ENCODE measurements at regions of chr2 and their contacts with region 1.

Region 1: DNA sequence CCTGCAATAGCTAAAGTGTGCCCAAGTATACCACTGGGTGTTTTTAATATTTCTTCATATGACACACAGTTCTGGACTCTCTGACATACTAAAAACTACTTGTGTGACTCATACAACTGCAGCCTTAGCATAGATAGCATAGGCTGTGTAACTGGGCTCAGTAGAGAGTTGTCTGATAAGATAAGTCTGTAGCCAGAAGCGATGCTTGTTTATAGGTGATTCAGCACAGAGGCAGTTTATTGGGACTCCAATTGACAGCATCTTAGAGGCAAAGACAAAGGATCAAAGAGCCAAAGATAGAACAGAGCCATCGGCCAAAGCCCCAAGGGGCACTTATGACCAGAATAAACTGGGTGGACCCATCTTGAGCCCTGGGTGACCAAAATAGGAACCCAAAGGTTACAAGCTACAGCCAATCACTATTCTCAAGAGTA is 42.3 kb downstream of the AAK1 start:
- DNase-seq: no peak
- ATAC-seq: peak; percentile 86
- H3K4me3 Mint-ChIP-seq: no peak overlapping the region
- H3K27ac Mint-ChIP-seq: peak overlapping the region; percentile 82
- H3K4me1 Mint-ChIP-seq: peaks cover 90% of the 10 kb centered on the region
- H3K27me3 Mint-ChIP-seq: no peaks in the 10 kb centered on the region
- CTCF ChIP-seq: no peak

Region 2: DNA sequence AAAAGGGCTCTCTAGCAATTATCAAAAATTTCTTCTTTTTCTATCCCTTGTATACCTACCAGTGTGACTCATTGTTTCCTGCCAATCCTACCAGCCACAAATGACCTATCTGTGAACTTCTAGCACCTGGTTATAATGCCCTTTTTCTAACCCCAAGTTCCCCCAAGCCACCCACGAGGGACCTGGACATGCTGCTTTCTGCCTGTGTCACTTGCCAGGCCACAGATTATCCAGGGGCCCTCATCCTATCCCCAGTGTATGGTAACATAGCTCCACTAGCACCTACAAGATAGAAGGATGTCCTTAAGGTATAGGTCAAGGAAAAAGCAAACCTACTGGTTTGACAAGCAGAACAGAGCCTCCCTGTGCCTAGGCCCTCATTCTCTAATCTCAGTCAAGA is 15.6 kb after region 1 on chr2:
- CTCF ChIA-PET with region 1: interaction called, 10 read pairs
- POLR2A ChIA-PET with region 1: interaction called, 11 read pairs
- intact Hi-C with region 1: no loop called
- DNase-seq: peak; percentile 86
- ATAC-seq: peak; percentile 57
- H3K4me3 Mint-ChIP-seq: peak overlapping the region; percentile 17
- H3K27ac Mint-ChIP-seq: peak overlapping the region; percentile 75
- H3K4me1 Mint-ChIP-seq: peaks cover 40% of the 10 kb centered on the region
- H3K27me3 Mint-ChIP-seq: no peaks in the 10 kb centered on the region
- CTCF ChIP-seq: no peak